ENCODE measurements at regions of chr2 and their contacts with region 1.

Region 1: DNA sequence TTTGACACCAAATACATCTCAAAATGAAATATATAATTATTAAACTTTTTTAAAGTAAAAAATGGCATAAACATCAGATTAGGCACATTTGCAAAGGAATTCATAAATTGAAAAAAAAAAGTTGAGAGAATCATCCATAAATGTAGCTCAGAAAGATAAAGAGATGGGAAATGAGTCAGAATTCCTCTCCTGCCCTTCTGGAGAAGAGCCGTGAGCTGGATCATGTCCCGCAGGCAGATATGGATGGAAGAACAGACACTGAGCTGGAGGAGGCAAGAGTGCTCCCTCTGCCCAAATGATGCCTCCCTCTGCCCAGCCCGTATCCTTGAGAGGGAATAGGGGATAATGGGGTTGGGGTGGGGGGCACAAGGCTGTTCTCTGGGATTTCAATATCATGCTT is 190.9 kb downstream of the TFCP2L1 start:
- DNase-seq: no peak
- H3K4me3 ChIP-seq: no peak overlapping the region
- CTCF ChIP-seq: no peak
- POLR2A ChIP-seq: no peak

Region 2: DNA sequence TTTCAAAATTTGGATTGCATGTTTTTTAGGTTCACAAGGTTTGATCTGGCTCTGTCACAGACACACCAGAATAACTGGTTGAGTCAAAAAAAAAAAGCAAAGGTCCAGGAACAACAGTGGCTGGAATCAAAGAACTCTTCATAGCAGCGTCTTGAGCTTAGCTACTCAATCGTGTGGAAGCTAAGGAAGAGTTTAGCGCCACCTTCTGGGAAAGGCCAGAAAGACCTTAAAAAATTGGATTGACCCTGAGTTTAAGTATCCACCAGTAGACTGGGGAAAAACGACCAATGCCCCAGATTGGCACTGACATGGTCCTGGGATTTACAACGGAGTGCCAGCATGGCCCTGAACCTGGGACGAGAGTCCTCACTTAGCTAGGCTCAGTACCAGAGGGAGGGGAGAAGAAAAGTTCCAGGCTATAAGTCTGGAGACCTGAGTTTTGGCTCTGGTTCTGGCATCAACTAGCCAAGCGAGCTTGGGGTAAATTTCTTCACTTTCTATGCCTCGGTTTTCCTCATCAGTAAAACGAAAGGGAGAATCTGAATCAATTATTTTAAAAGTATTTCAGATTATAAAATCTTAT is 262.0 kb after region 1 on chr2:
- intact Hi-C with region 1: loop called (anchors 5 kb)
- DNase-seq: peak in 1 of 2 donors; percentile 51
- H3K4me3 ChIP-seq: no peak overlapping the region
- CTCF ChIP-seq: no peak
- POLR2A ChIP-seq: no peak

Measured in lower leg skin (tissue), 4 donors.